ENCODE measurements at regions of chr21 and their contacts with region 1.

Region 1: DNA sequence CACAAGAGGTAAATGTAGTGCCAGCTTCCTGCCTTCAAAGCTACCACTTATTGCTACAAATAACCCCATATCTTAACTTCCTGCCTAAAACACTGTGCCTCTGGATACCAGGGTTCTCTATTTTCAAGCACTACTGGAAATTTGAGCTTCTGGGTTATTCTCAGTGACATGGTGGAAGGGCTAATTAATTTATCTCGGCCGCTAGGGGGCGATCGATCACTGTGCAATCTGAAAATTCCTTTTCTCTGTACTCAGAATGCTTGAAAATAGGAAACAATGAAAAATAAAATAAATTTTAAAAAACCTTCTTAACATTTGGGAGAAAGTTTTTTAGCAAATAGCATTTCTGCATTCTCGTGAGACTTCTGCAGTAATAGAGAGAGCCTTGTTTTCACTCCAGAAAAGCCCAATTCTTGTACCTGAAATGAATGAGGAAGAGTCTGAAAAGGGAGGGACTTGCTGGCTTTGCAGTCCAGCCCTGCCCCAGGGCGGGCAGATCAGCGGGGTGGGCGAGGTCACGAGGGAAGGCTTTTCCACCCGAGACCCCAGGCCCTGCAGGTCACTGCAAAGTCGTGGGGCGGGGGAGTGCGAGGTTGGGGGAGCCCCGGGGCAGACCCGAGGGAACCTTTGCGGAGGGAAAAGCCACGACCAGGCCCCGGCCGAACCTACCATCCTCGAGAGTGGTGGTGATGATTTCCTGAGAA is 276.7 kb downstream of the PCP4 start:
- DNase-seq: peak in 1 of 2 experiments; percentile 57
- H3K4me3 ChIP-seq: no peak overlapping the region
- H3K4me3 Mint-ChIP-seq: no peak overlapping the region
- H3K27ac Mint-ChIP-seq: no peak overlapping the region
- H3K4me1 ChIP-seq: no peaks in the 10 kb centered on the region
- H3K4me1 Mint-ChIP-seq: no peaks in the 10 kb centered on the region
- H3K27me3 ChIP-seq: no peaks in the 10 kb centered on the region
- H3K27me3 Mint-ChIP-seq: peaks cover 4% of the 10 kb centered on the region
- CTCF ChIP-seq: peak; percentile 57 to 77

Region 2: DNA sequence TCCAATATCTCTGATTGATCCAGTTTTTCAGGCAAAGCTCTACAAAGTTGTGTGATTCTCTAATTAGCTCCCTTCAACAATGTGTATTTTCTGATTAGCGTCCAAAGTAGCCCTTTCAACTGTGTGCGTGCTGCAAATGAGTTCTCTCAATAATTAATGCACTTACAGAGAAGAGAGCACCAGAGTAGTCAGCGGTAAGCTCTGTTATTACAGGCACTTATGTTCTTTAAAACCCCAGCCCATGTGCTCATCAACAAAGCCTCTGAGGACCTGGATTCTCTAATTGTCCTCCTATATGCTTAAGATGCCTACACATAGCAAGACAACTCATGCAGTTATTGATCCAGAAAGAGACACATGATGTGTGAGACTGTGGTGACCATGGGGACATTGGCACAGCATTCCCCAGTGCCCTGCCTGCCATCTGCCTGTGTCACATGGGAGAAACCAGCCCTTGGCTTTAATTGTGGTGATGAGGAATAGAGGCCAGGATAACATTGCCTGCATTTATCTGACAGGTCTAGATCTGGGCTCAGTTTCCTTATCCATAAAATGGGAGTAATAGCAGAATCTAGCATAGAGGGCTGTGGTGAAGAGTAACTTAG is 125.0 kb before region 1 on chr21:
- CTCF ChIA-PET with region 1: no interaction called
- POLR2A ChIA-PET with region 1: no interaction called
- intact Hi-C with region 1: no loop called
- DNase-seq: no peak
- H3K4me3 ChIP-seq: no peak overlapping the region
- H3K4me3 Mint-ChIP-seq: no peak overlapping the region
- H3K27ac Mint-ChIP-seq: no peak overlapping the region
- H3K4me1 ChIP-seq: no peaks in the 10 kb centered on the region
- H3K4me1 Mint-ChIP-seq: no peaks in the 10 kb centered on the region
- H3K27me3 ChIP-seq: no peaks in the 10 kb centered on the region
- H3K27me3 Mint-ChIP-seq: peaks cover 3% of the 10 kb centered on the region
- CTCF ChIP-seq: no peak

Region 3: DNA sequence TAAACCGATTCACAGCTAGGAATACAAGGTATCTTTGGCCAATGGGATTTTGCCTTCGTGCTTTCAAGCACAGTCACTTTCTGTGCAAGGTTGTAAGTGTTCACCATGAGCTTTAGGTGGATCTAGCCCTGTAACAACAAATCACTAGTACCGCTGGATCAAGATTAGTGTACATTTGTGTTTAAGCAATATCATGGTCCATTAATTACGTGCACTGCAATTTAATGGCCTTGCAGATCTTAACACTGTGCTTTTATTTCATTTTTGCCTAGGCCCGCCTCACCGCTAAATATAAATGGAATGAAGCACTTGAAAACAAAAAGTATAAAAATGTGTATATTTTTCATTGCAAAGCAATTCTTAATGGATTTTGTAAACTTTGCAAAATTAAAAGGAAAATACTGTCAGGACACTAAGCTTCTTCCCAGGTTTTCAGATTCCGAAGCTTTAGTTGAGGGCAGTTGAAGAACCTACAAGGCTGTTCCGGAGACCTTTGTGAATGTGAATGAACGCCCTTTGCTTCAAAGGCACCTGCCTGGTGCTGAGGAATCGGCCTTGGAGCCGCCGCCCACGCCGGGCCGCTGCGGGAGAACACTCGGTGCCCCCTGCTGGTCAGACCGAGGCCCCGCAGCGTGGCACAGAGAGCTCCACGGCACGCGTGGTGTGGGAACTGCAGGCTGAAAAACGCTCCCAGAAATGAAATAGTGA is 242.1 kb after region 1 on chr21:
- CTCF ChIA-PET with region 1: interaction called, 10 read pairs
- POLR2A ChIA-PET with region 1: no interaction called
- intact Hi-C with region 1: loop called (anchors 1 kb)
- DNase-seq: peak; percentile 55 to 71
- H3K4me3 ChIP-seq: no peak overlapping the region
- H3K4me3 Mint-ChIP-seq: no peak overlapping the region
- H3K27ac Mint-ChIP-seq: no peak overlapping the region
- H3K4me1 ChIP-seq: 0 out of 2 replicates have a peak, but pooled peaks cover 6% of the 10 kb centered on the region
- H3K4me1 Mint-ChIP-seq: no peaks in the 10 kb centered on the region
- H3K27me3 ChIP-seq: no peaks in the 10 kb centered on the region
- H3K27me3 Mint-ChIP-seq: peaks cover 14% of the 10 kb centered on the region
- CTCF ChIP-seq: peak; percentile 88 to 89

Region 4: GRCh38 chr21:41068967-41069642 is 925.1 kb after region 1 on chr21:
- CTCF ChIA-PET with region 1: interaction called, 3 read pairs
- POLR2A ChIA-PET with region 1: no interaction called
- intact Hi-C with region 1: loop called (anchors 10 kb)
- DNase-seq: peak; percentile 81 to 86
- H3K4me3 ChIP-seq: no peak overlapping the region
- H3K4me3 Mint-ChIP-seq: peak overlapping the region; percentile 47
- H3K27ac Mint-ChIP-seq: no peak overlapping the region
- H3K4me1 ChIP-seq: no peaks in the 10 kb centered on the region
- H3K4me1 Mint-ChIP-seq: no peaks in the 10 kb centered on the region
- H3K27me3 ChIP-seq: no peaks in the 10 kb centered on the region; the same call in 1 of the 2 replicates
- H3K27me3 Mint-ChIP-seq: peaks cover 20% of the 10 kb centered on the region
- CTCF ChIP-seq: peak; percentile 79 to 92